Mammary epithelial cell (primary cell): ENCODE measurements at regions of chr3 and their contacts with region 1.

Region 1: DNA sequence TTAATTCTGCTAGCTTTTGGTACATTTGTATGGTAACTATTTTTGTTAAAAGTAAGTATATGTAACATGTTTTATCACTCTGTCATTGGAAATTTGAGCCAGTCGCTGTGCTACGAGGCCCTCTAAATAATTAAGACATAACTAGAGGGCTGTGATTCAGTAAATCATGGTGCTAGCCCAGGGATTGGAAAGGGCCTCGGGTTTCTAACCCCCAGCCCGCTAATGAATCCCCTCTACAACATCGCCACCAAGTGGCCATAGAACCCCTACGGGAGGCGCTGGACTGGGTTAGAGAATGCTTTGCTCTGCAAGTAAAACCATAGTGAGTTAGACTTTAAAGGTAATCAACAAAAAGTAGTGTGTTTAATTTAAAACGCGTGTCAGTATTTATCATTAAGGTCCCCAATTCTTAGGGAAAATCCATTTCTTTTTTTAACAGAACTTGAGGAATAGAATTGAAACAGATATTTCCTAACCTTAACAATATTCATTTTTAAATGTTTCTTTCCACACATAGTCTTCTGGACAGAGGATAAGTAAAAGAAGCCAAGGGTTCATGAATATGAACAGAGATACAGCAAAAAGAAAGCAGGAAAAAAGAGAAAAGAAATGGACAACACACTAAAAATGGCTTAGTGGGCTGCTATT is 744.7 kb downstream of the EPHA3 start:
- DNase-seq: no peak
- H3K4me3 ChIP-seq: no peak overlapping the region
- H3K27ac ChIP-seq: no peak overlapping the region
- H3K4me1 ChIP-seq: no peaks in the 10 kb centered on the region
- H3K27me3 ChIP-seq: no peaks in the 10 kb centered on the region
- CTCF ChIP-seq: peak; percentile 44 to 50

Region 2: DNA sequence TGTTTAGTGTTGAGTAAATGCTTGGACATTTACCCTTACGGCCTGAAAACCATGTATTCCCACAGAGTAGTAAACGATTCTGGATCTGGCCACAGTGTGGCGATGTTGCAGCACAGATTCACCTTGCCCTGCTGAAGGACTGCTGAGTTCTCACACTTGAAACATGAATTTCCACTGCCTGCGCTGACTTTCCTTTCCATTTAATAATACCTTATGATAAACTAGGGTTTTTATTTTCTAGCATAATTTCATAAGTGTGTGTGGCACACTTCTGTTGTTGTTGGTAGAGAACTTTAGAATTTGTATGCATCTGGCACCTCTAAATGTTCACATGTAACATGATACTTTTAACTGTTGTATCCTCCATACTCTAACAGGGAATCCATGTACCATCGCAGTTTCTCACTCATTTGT is 1648.4 kb before region 1 on chr3:
- CTCF ChIA-PET with region 1: no interaction called
- dilution Hi-C with region 1: no loop called
- in situ Hi-C with region 1: loop called in 1 of 2 experiments (anchors 25 kb)
- intact Hi-C with region 1: loop called (anchors 1 kb)
- DNase-seq: peak; percentile 42
- H3K4me3 ChIP-seq: no peak overlapping the region
- H3K27ac ChIP-seq: no peak overlapping the region
- H3K4me1 ChIP-seq: no peaks in the 10 kb centered on the region
- H3K27me3 ChIP-seq: no peaks in the 10 kb centered on the region
- CTCF ChIP-seq: peak; percentile 84 to 90

Region 3: GRCh38 chr3:88219138-88219792 is 1632.8 kb before region 1 on chr3:
- CTCF ChIA-PET with region 1: no interaction called
- dilution Hi-C with region 1: no loop called
- in situ Hi-C with region 1: loop called in 1 of 2 experiments (anchors 25 kb)
- intact Hi-C with region 1: loop called (anchors 5 kb)
- DNase-seq: peak; percentile 48
- H3K4me3 ChIP-seq: no peak overlapping the region
- H3K27ac ChIP-seq: no peak overlapping the region
- H3K4me1 ChIP-seq: no peaks in the 10 kb centered on the region
- H3K27me3 ChIP-seq: no peaks in the 10 kb centered on the region
- CTCF ChIP-seq: peak; percentile 62 to 80

Region 4: DNA sequence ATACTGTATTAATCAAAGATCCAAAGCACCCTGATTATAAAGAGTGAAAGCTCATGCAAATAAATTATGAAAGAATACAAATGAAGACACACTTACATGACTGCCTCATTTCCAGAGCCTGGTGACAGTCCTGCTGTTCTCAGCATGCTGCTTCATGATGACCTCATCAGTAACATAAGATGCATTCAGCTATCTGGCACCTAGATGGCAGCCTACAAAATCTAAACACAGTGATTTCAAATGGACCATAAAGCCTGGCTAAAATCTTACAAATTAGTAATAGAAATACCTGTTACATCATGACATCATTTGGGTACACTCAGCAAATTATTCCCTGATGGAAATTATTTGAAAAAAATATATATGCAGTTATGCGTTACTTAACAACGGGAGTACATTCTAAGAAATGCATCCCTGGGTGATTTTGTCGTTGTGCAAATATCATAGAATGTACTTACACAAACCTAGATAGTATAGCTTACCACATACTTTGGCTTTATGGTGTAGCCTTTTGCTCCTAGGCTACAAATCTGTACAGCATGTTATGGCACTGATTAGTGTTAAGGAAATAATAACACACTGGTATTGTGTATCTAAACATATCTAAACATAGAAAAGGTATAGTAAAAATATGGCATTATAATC is 537.5 kb before region 1 on chr3:
- CTCF ChIA-PET with region 1: no interaction called
- dilution Hi-C with region 1: no loop called
- in situ Hi-C with region 1: no loop called
- intact Hi-C with region 1: loop called (anchors 1 kb)
- DNase-seq: peak; percentile 35
- H3K4me3 ChIP-seq: no peak overlapping the region
- H3K27ac ChIP-seq: no peak overlapping the region
- H3K4me1 ChIP-seq: no peaks in the 10 kb centered on the region
- H3K27me3 ChIP-seq: no peaks in the 10 kb centered on the region
- CTCF ChIP-seq: peak; percentile 12 to 47